HEK293 (cell line): ENCODE measurements at regions of chr4 and their contacts with region 1.

Region 1: DNA sequence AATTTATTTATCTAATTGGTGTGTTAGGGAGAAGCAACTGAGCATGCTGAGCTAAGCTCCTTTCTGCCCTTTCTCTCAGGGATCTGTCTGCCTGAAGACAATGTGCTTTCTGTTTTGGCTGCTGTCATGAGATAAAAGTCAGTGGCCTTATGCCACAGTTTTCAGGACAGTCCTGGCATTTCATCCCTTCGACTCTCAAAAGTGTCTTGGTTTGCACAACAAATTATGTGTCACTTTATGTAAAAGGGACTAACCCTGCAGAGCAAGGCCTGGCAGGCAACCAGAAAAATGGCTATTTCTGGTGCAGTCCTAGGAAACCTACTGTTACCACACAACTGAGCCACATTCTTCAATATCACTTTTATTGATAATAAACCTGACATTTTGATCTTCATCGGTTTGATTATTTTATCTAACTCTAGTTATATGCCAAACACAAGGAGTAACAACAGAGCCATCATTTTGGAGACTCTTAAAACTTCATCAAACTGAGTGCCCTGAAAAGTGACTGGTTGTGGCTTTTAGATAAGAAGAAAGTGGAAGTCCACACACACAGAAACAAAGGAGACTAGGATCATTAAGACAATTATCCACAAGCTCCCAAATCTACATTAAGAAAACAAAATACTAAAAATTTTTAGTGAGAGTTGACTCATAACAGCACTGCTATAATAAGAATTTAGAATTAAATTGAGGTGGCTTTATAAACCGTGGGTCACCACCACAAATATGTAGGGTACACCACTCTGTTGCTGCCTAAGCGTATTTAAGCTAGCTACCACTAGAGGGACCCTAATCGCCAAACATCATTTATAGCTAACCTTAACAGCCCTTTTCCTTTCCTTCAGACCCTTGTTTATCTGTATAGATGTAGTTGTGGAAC is 95.9 kb upstream of the PTPN13 start:
- H3K4me3 ChIP-seq: no peak overlapping the region
- H3K27ac ChIP-seq: no peak overlapping the region
- H3K4me1 ChIP-seq: no peaks in the 10 kb centered on the region
- CTCF ChIP-seq: no peak

Region 2: GRCh38 chr4:86593688-86594558 is 95.7 kb after region 1 on chr4 and contains the start of gene PTPN13:
- CTCF ChIA-PET with region 1: interaction called, 29 read pairs
- POLR2A ChIA-PET with region 1: no interaction called
- H3K4me3 ChIP-seq: peak within 1 kb of the TSS; percentile 72
- H3K27ac ChIP-seq: peak within 1 kb of the TSS; percentile 95
- H3K4me1 ChIP-seq: peaks cover 18% of the 10 kb centered on the region
- CTCF ChIP-seq: peak; percentile 25; the same call in 1 of the 2 replicates

Region 3: DNA sequence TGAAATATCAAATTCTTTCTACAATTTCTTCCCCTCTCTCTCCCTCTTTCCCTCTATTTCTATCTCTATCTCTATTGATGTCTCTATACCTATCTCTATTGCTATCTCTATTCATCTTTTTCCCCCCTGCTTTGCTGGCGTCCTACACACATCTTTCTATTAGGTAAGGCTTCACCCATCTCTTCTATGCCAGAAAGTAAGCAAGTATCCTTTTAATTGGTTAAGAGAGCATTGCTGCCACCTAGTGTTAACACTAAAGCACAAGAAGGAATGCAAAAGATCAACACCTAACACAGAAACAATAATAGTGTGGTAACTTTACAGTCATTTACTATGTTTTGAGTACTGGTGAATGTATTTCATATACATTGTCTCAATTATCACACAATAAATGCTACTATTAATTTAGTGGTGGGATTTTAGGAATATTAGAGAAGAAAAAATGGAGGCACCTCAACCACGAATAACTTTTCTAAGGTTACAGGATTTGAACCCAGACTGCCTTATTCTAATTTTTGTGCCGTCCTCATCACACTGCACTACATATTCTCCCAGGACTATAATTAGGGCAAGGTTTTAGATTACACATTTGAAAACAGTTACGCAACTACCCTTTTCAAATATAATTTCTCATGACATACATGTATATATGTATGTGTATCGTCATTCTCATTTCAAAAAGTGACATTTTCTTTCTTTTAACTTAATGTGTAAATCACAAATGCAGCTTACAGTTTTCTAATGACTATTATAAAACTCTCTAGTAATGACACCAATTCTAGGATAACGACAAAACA is 397.7 kb after region 1 on chr4:
- CTCF ChIA-PET with region 1: interaction called, 29 read pairs
- POLR2A ChIA-PET with region 1: no interaction called
- H3K4me3 ChIP-seq: no peak overlapping the region
- H3K27ac ChIP-seq: no peak overlapping the region
- H3K4me1 ChIP-seq: no peaks in the 10 kb centered on the region
- CTCF ChIP-seq: peak; percentile 49; the same call in 1 of the 2 replicates